ENCODE measurements at regions of chr4 and their contacts with region 1.

Region 1: DNA sequence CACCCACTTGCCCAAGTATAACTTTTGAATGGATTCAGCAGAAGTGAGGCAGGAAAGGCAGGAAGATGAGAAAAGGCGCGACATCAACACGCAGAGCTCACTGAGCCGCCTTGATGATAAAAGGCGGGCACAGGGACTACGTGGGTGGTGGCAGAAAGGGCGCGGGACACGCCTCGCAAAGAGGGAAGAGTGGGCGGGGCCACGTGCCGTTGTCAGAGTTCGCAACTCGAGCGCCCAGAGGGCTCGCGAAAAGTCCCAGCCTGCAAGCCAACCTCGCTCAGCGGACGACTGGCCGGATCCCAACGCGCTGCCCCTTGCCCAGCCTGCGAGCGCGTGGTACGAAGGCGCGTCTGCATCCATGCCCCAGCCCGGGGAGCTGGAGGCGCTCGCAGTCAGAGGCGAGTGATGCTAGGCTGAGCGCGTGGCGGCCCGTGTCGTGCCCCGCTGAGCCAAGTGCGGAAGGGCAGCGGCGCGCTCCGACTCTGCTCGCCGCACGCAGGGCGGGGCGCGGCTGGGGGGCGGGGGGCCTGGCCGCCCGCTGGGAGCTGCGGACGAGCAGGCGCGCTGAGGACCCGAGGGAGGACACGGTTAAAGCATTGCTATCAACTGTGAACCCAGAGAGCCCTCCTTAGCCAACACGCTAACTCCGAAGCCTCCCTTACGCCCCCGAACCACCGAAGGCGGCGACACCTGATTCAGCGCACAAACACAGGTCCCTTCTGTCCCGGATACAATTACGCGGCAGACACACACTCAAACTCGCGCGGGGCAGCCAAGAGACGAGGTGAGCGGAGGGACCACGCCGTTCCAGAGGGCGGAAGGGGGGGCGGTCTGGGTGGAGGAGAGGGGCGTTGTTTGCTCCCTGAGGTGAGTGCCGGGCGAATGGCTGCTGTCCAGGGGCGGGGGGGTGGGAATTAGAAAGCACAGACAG is at the start of gene UGT8:
- DNase-seq: peak; percentile 57 to 96 (median 70)

Region 2: DNA sequence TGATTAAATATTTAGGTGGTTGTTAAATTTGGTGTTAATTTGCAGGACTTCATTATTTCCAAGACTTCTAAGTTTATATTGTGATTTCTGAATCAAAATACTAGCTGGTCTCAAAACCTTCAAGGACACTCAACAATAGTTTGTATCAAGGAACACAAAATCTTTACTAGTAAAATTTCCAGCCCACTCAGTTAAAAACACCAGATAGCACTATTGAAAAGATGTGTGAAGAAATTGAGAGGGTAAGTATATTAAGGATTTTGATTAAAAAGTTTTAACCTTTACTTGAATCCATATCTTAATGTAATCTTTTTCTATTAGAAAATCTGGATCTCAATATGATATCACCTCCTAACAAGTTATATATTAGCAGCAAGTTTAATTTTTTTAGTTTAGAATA is 89.1 kb before region 1 on chr4:
- intact Hi-C with region 1: loop called (anchors 10 kb)
- DNase-seq: no peak

Region 3: GRCh38 chr4:114659386-114660008 is 61.0 kb after region 1 on chr4:
- intact Hi-C with region 1: loop called (anchors 2 kb)
- DNase-seq: peak; percentile 36 to 94 (median 73)

Region 4: DNA sequence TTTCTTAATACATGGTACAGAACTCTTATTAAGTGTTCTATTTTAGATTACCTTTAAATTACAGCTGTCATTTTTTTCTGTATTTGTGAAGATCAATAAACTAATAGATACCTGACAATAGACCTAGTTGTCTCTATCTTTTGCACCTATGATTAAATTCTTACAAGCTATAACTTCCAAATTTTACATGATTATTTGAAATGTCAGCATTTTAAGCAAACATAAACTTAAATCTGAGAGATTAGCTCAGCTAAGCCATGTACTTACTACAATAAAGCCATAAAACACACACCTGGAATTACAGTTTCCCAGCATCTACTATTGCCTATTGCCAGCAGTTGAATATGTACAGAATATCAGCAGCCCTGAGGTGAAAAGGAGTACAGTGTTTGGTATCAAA is 119.0 kb after region 1 on chr4:
- intact Hi-C with region 1: no loop called
- DNase-seq: no peak

Region 5: DNA sequence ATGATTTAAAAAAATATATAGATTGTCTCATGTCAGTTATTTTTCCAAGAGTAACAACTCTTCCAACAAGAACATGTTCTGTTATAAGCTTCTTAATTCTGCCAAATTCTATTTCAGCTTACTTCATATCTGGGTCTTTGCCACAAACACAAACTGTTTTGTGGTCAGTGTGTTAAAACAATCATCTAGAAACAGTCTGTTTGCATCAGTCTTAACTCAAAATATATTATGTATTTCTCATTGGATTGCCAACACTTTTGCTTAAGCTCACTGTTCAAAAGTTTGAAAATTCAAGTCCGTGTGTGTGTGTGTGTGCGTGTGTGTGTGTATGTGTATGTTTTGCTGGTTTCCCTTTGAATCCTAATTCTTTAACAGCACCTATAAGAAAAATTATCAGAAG is 1267.3 kb after region 1 on chr4:
- intact Hi-C with region 1: no loop called
- DNase-seq: no peak

Measured in posterior cingulate gyrus (tissue), 11 donors.